ENCODE measurements at regions of chr13 and their contacts with region 1.

Region 1: DNA sequence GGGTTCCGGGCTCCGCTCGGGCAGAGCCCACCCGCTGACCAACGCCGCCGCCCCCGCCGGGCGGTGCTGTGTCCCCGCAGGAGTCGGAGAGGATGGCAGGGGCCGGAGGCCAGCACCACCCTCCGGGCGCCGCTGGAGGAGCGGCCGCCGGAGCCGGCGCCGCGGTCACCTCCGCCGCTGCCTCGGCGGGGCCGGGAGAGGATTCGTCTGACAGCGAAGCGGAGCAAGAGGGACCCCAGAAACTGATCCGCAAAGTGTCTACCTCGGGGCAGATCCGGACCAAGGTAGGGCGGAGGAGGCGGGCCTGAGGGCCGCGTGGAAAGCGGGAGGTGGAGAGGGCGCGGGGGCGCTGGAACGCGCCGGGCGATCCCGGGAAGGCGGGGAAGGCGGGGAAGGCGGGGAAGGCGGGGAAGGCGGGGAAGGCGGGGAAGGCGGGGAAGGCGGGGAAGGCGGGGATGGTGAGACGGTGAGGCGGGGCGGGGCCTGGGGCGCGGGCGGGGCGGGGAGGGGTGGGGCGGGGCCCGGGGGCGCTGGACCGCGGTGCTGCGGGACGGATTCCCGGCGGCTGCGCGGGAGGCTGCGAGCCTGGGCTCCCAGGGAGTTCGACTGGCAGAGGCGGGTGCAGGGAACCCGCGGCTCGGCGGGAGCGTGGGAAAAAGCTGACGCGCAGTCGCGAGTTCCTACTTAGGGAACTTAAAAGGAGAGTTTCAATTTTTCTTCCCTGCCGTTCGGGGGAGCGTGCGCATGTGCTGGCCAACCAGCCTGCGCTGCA is 420 bp downstream of the DGKH start:
- DNase-seq: peak; percentile 20 to 81 (median 43)
- ATAC-seq: peak; percentile 81
- H3K4me3 ChIP-seq: peak overlapping the region; percentile 84
- H3K4me3 Mint-ChIP-seq: peak overlapping the region; percentile 83 to 96 (median 92)
- H3K27ac ChIP-seq: peak overlapping the region; percentile 67
- H3K27ac Mint-ChIP-seq: peak overlapping the region in 2 of 9 donors; percentile 74 to 78
- H3K4me1 ChIP-seq: peaks cover 5 to 9% of the 10 kb centered on the region in 2 donors
- H3K4me1 Mint-ChIP-seq: peaks cover 6 to 38% (median 15%) of the 10 kb centered on the region in 7 donors
- H3K27me3 ChIP-seq: no peaks in the 10 kb centered on the region
- H3K27me3 Mint-ChIP-seq: peaks cover 0 to 15% (median 0%) of the 10 kb centered on the region in 5 donors

Region 2: DNA sequence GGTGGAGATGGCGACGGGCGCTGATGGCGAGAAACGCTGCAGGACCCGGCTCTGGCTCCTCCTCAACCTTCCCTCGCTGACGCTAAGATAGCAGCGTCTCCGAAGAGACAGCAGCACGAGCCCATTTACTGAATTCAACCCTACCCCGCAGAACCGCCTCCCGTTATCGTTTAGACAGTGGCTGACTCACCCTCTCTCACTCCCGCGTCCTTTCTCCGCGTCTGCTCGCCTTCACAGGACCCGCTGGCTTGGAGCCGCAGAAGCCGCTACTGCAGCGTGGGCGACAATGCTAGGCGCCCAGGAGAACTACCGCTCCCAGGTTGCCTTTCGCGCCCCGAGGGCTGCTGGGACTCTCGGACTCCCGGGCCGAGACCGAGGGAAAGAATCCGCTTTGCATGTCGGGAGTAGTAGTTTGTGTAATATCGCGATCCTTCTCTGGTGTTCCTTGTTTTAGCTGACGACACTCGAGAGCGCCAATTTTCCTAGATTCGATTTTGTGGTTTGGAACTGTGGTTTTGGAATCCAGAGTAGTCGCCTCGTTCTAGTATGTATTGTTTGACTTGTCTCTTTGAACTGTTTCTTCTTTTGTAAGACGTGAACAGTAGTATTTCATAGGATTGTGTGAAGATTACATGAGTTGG is 916.2 kb before region 1 on chr13 and contains the start of gene KBTBD6:
- CTCF ChIA-PET with region 1: no interaction called
- POLR2A ChIA-PET with region 1: no interaction called
- intact Hi-C with region 1: loop called (anchors 5 kb)
- DNase-seq: peak; percentile 76 to 93 (median 87)
- ATAC-seq: peak; percentile 98
- H3K4me3 ChIP-seq: peak within 1 kb of the TSS; percentile 77
- H3K4me3 Mint-ChIP-seq: peak within 1 kb of the TSS; percentile 94 to 99 (median 98)
- H3K27ac ChIP-seq: peak within 1 kb of the TSS; percentile 67
- H3K27ac Mint-ChIP-seq: peak within 1 kb of the TSS; percentile 91 to 97 (median 93)
- H3K4me1 ChIP-seq: peaks cover 15 to 24% of the 10 kb centered on the region in 2 donors
- H3K4me1 Mint-ChIP-seq: peaks cover 32 to 60% (median 54%) of the 10 kb centered on the region in 7 donors
- H3K27me3 ChIP-seq: no peaks in the 10 kb centered on the region
- H3K27me3 Mint-ChIP-seq: no peaks in the 10 kb centered on the region
- total RNA-seq, gene KBTBD6: 3.9 to 9.2 (median 7.7) TPM

Region 3: GRCh38 chr13:41159174-41159573 is 889.7 kb before region 1 on chr13:
- CTCF ChIA-PET with region 1: no interaction called
- POLR2A ChIA-PET with region 1: no interaction called
- intact Hi-C with region 1: no loop called
- DNase-seq: no peak
- ATAC-seq: no peak
- H3K4me3 ChIP-seq: no peak overlapping the region
- H3K4me3 Mint-ChIP-seq: no peak overlapping the region
- H3K27ac ChIP-seq: no peak overlapping the region
- H3K27ac Mint-ChIP-seq: peak overlapping the region in 1 of 9 donors; percentile 65
- H3K4me1 ChIP-seq: no peaks in the 10 kb centered on the region
- H3K4me1 Mint-ChIP-seq: peaks cover 0 to 7% (median 0%) of the 10 kb centered on the region in 7 donors
- H3K27me3 ChIP-seq: no peaks in the 10 kb centered on the region
- H3K27me3 Mint-ChIP-seq: peaks cover 0 to 3% (median 0%) of the 10 kb centered on the region in 5 donors

Region 4: GRCh38 chr13:41916173-41916954 is 132.5 kb before region 1 on chr13:
- CTCF ChIA-PET with region 1: no interaction called
- POLR2A ChIA-PET with region 1: no interaction called
- intact Hi-C with region 1: loop called in 1 of 2 experiments (anchors 5 kb)
- DNase-seq: peak in 5 of 9 donors; percentile 15 to 47 (median 30)
- ATAC-seq: peak; percentile 76
- H3K4me3 ChIP-seq: no peak overlapping the region
- H3K4me3 Mint-ChIP-seq: peak overlapping the region in 9 of 10 donors; percentile 26 to 81 (median 57)
- H3K27ac ChIP-seq: no peak overlapping the region
- H3K27ac Mint-ChIP-seq: peak overlapping the region in 7 of 9 donors; percentile 0 to 87 (median 47)
- H3K4me1 ChIP-seq: peaks cover 11 to 15% of the 10 kb centered on the region in 2 donors
- H3K4me1 Mint-ChIP-seq: peaks cover 26 to 65% (median 44%) of the 10 kb centered on the region in 7 donors
- H3K27me3 ChIP-seq: no peaks in the 10 kb centered on the region
- H3K27me3 Mint-ChIP-seq: no peaks in the 10 kb centered on the region